Activated CD8-positive, alpha-beta T cell treated with anti-CD3 and anti-CD28 coated beads for 36 hours (primary cell): ENCODE measurements at regions of chr14 and their contacts with region 1.

Region 1: DNA sequence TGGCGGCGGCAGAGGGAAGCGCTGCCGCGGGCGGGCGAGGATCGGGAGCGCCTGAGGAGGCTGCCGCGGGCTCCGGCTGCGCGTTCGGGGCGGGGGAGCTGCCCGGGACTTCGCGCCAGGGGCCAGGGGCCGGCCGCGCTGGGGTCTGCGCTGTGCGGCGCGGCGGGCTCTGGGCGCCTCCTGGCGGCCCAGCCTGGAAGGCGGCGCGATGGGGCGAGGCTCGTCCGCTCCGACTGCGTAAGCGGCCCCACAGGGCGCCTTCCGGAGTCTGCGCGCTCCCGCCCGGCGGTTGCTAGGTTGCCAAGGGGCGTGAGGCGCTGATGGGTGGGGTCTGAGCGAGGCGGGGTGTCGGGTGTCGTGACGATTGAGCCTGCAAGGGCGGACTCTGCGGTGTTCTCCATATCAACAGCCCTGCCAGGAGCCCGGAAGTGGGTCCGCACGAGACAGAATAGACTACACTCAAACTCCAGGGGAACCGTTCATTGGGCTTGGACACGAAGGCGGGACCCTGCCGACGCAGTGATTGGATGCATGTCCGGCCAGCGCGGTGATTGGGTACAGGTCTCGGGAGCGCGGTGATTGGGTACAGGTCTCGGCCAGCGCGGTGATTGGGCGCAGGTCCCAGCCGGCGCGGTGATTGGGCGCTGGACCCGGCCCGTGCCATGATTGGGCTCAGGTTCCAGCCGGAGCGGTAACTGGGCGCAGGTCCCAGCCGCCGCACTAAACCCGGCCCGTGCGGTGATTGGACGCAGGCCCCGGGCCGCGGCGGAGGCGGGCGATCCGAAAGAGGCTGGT is at the start of gene TEDC1:
- DNase-seq: peak; percentile 100
- ATAC-seq: peak; percentile 77
- H3K4me3 Mint-ChIP-seq: peak within 1 kb of the TSS; percentile 77
- H3K27ac Mint-ChIP-seq: peak within 1 kb of the TSS; percentile 90
- H3K4me1 Mint-ChIP-seq: peaks cover 24% of the 10 kb centered on the region
- H3K27me3 Mint-ChIP-seq: no peaks in the 10 kb centered on the region
- CTCF ChIP-seq: peak; percentile 84
- total RNA-seq, gene TEDC1: 30.1 to 31.1 TPM

Region 2: GRCh38 chr14:105368965-105369652 is 121.7 kb before region 1 on chr14:
- CTCF ChIA-PET with region 1: interaction called, 84 read pairs
- POLR2A ChIA-PET with region 1: interaction called, 3 read pairs
- intact Hi-C with region 1: loop called (anchors 5 kb)
- DNase-seq: no peak
- ATAC-seq: no peak
- H3K4me3 Mint-ChIP-seq: no peak overlapping the region
- H3K27ac Mint-ChIP-seq: no peak overlapping the region
- H3K4me1 Mint-ChIP-seq: peaks cover 9% of the 10 kb centered on the region
- H3K27me3 Mint-ChIP-seq: no peaks in the 10 kb centered on the region
- CTCF ChIP-seq: no peak

Region 3: GRCh38 chr14:105375635-105376057 is 115.1 kb before region 1 on chr14:
- CTCF ChIA-PET with region 1: interaction called, 84 read pairs
- POLR2A ChIA-PET with region 1: interaction called, 3 read pairs
- intact Hi-C with region 1: loop called (anchors 5 kb)
- DNase-seq: peak; percentile 92
- ATAC-seq: peak; percentile 83
- H3K4me3 Mint-ChIP-seq: no peak overlapping the region
- H3K27ac Mint-ChIP-seq: peak overlapping the region; percentile 67
- H3K4me1 Mint-ChIP-seq: peaks cover 13% of the 10 kb centered on the region
- H3K27me3 Mint-ChIP-seq: no peaks in the 10 kb centered on the region
- CTCF ChIP-seq: no peak

Region 4: DNA sequence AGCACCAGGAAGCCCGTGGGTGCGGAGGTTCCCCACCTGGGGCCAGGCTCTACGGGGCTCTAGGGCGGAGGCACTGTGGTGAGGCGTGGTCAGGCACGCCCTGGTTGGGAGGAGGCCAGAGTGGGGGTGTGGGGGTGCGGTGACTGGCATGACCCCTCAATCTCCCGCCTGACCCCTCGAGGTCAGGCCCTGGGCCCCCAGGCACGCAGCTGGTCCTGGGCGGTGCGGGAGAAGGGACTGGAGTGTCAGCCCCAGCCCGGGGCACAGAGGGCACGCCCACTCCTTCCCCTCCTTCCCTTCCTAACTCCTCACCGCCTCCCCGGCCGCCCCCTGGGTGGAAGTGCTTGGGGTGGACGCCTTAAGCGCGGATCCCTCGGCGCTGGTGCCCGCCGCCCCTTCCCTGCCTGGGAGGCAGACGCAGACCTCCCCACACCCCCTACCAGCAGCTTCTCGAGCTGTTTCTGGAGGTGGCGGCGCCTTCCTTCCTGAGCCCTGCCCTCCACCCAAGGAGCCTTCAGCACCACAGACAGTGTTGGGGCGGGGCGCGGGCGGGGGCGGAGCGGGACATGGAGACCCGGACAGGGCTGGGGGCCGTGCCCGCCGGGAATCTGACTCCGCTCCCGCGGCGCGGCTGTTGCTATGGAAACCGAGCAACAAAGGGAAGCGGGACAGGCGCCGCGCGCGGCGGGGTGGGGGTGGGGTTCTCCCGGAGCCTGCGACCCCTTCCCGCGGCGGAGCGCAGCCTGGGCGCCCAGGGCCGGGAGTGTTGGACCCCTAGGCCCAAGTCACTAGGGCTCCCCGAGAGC is 16.9 kb before region 1 on chr14:
- CTCF ChIA-PET with region 1: interaction called, 20 read pairs
- POLR2A ChIA-PET with region 1: interaction called, 3 read pairs
- intact Hi-C with region 1: no loop called
- DNase-seq: peak; percentile 73
- ATAC-seq: peak; percentile 58
- H3K4me3 Mint-ChIP-seq: no peak overlapping the region
- H3K27ac Mint-ChIP-seq: no peak overlapping the region
- H3K4me1 Mint-ChIP-seq: peaks cover 10% of the 10 kb centered on the region
- H3K27me3 Mint-ChIP-seq: peaks cover 14% of the 10 kb centered on the region
- CTCF ChIP-seq: no peak

Region 5: GRCh38 chr14:105527661-105528581 is 37.2 kb after region 1 on chr14:
- CTCF ChIA-PET with region 1: interaction called, 13 read pairs
- POLR2A ChIA-PET with region 1: interaction called, 11 read pairs
- intact Hi-C with region 1: no loop called
- DNase-seq: peak; percentile 86
- ATAC-seq: peak; percentile 60
- H3K4me3 Mint-ChIP-seq: peak overlapping the region; percentile 81
- H3K27ac Mint-ChIP-seq: peak overlapping the region; percentile 69
- H3K4me1 Mint-ChIP-seq: peaks cover 17% of the 10 kb centered on the region
- H3K27me3 Mint-ChIP-seq: peaks cover 3% of the 10 kb centered on the region
- CTCF ChIP-seq: peak; percentile 81